ENCODE measurements at regions of chr12 and their contacts with region 1.

Region 1: DNA sequence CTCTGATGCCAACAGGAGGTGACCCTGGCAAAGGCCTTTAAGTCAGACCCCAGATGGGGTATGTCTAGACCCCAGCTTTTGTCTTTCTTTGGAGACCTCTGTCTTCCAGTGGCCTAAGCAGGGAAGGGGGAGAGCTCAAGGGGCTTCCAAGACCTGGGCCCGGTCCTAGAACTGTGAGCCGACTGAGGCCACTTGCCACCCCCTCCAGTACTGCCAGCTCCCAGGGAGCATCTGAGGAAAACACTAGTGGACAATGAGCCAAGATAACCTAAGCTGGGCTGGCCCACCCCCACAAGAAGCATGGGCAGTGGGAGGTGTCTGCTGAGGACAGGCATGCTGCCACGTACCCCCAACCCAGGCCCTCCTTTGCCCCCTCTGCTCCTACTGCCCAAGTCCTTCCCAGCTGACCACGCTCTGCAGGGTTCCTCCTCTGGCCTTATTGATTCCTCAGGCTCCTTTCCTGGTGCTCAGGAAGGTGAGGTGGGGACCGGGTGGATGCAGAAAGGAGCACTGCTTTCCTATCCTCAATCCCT is 21.1 kb downstream of the VDR start:
- DNase-seq: no peak
- ATAC-seq: no peak
- H3K4me3 ChIP-seq: peak overlapping the region in 1 of 2 donors; percentile 62
- H3K4me3 Mint-ChIP-seq: peak overlapping the region; percentile 81 to 88 (median 84)
- H3K27ac ChIP-seq: no peak overlapping the region
- H3K27ac Mint-ChIP-seq: peak overlapping the region; percentile 95 to 97
- H3K4me1 ChIP-seq: peaks cover 30 to 43% of the 10 kb centered on the region in 2 experiments
- H3K4me1 Mint-ChIP-seq: peaks cover 50 to 60% (median 59%) of the 10 kb centered on the region in 3 donors
- H3K27me3 ChIP-seq: peaks cover 0 to 17% of the 10 kb centered on the region in 2 experiments
- H3K27me3 Mint-ChIP-seq: no peaks in the 10 kb centered on the region

Region 2: DNA sequence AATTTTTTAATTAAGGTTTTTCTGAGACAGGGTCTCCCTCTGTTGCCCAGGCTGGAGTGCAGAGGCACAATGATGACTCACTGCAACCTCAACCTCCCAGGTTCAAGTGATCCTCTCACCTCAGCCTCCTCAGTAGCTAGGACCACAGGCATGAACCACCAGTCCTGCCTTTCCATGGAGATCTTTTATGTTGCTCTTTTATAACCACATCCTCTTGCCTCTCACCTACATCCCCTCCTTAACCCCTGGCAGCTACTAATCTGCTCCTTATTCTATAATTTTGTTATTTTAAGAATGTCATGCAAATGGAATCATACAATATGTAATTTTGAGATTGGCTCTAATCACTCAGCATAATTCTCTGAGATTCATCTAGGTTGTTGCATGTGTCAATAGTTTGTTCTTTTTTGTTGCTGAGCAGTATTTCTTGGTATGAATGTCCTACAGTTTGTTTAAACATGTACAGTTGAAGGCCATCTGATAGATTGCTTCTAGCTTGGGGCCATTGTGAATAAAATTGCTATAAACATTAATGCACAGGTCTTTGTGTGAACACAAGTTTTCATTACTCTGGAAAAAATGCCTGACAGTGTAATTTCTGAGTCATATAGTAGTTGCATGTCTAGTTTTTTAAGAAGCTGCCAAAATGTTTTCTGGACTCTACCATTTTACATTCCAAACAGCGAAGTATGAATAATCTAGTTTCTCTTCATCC is 554.7 kb before region 1 on chr12:
- CTCF ChIA-PET with region 1: no interaction called
- POLR2A ChIA-PET with region 1: interaction called in 1 of 2 experiments, 11 read pairs
- DNase-seq: no peak
- ATAC-seq: peak in 2 of 4 experiments; percentile 36 to 48
- H3K4me3 ChIP-seq: no peak overlapping the region
- H3K4me3 Mint-ChIP-seq: no peak overlapping the region
- H3K27ac ChIP-seq: no peak overlapping the region
- H3K27ac Mint-ChIP-seq: peak overlapping the region; percentile 63 to 68
- H3K4me1 ChIP-seq: peaks cover 0 to 6% of the 10 kb centered on the region in 2 experiments
- H3K4me1 Mint-ChIP-seq: peaks cover 17 to 27% (median 18%) of the 10 kb centered on the region in 3 donors
- H3K27me3 ChIP-seq: no peaks in the 10 kb centered on the region
- H3K27me3 Mint-ChIP-seq: no peaks in the 10 kb centered on the region